ENCODE measurements at regions of chr1 and their contacts with region 1.

Region 1: DNA sequence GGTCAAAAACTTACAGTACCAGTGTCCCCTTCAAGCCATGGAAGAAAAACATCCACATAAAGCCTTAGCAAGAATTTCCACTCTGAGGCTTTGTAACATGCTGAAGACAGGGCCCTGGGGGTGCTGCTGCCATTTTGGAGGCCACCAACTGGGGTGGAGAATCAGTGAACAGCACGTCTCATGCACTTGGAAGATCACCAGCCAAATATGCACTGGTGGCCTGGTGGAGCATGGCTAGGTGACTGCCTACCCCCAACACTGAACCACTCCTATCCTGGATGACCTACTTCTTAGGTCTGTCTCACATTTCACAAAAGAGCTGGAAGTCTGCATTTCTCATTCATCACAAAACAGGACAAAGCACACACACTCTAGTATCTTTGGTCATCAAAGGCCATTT is 126.4 kb downstream of the COL24A1 start:
- DNase-seq: no peak
- ATAC-seq: no peak
- H3K4me3 Mint-ChIP-seq: no peak overlapping the region
- H3K27ac Mint-ChIP-seq: no peak overlapping the region
- H3K4me1 Mint-ChIP-seq: peaks cover 4% of the 10 kb centered on the region
- H3K27me3 Mint-ChIP-seq: no peaks in the 10 kb centered on the region
- CTCF ChIP-seq: no peak

Region 2: DNA sequence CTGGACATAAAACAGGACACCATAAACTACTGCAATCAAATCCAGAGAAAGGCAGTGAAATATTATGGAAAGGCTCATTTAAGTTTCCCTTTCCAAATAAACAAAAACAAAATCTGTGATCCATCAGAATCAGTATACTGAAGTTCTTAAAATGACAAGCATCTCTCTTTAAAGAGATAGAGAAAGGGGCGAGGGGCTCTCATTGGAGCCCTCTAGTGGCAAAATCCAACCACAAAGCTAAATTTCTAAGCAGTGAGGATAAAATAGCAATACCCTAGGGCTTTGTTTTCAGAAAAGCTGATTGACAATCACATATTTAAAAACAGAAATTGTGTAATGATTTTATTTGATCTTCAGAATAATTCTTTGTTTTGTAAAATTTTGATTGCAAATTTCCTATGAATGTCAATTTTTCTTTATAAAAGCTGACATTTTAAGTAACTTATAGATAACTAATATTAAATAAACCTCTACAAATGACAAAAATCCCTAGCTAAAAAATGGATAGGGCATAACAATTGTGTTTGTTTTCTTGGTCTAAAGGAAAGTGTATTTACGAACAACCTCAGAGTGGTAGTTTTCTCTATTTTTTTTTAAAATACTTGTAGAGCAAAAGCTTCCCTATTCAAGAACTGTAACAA is 11.8 kb before region 1 on chr1:
- CTCF ChIA-PET with region 1: interaction called, 15 read pairs
- POLR2A ChIA-PET with region 1: no interaction called
- DNase-seq: peak; percentile 13
- ATAC-seq: peak; percentile 59
- H3K4me3 Mint-ChIP-seq: no peak overlapping the region
- H3K27ac Mint-ChIP-seq: no peak overlapping the region
- H3K4me1 Mint-ChIP-seq: no peaks in the 10 kb centered on the region
- H3K27me3 Mint-ChIP-seq: no peaks in the 10 kb centered on the region
- CTCF ChIP-seq: 0 out of 2 replicates have a peak, but pooled peaks have one; percentile 29